Breast epithelium (tissue), 4 donors: ENCODE measurements at regions of chr16 and their contacts with region 1.

Region 1: DNA sequence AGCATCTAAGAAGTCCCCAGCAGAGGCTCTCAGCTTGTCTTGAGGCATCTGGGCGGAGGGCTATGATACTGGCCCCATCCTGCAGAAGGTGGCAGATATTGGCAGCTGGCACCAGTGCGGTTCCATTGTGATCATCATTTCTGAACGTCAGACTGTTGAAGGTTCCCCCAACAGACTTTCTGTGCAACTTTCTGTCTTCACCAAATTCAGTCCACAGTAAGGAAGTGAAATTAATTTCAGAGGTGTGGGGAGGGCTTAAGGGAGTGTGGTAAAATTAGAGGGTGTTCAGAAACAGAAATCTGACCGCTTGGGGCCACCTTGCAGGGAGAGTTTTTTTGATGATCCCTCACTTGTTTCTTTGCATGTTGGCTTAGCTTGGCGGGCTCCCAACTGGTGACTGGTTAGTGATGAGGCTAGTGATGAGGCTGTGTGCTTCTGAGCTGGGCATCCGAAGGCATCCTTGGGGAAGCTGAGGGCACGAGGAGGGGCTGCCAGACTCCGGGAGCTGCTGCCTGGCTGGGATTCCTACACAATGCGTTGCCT is at the start of gene CIITA:
- DNase-seq: peak; percentile 58 to 59
- H3K4me3 ChIP-seq: peak within 1 kb of the TSS in 2 of 3 donors; percentile 61 to 68
- H3K27ac ChIP-seq: peak within 1 kb of the TSS in 1 of 2 donors; percentile 32
- H3K4me1 ChIP-seq: no peaks in the 10 kb centered on the region
- H3K27me3 ChIP-seq: no peaks in the 10 kb centered on the region
- CTCF ChIP-seq: no peak
- POLR2A ChIP-seq: no peak
- total RNA-seq, gene CIITA: 5.6 to 14.6 (median 11.1) TPM

Region 2: GRCh38 chr16:10683170-10683569 is 193.7 kb before region 1 on chr16:
- intact Hi-C with region 1: no loop called
- DNase-seq: no peak
- H3K4me3 ChIP-seq: no peak overlapping the region
- H3K27ac ChIP-seq: no peak overlapping the region
- H3K4me1 ChIP-seq: no peaks in the 10 kb centered on the region
- H3K27me3 ChIP-seq: no peaks in the 10 kb centered on the region
- CTCF ChIP-seq: no peak
- POLR2A ChIP-seq: no peak

Region 3: GRCh38 chr16:10787304-10787703 is 89.6 kb before region 1 on chr16:
- intact Hi-C with region 1: loop called (anchors 2 kb)
- DNase-seq: no peak
- H3K4me3 ChIP-seq: no peak overlapping the region
- H3K27ac ChIP-seq: no peak overlapping the region
- H3K4me1 ChIP-seq: no peaks in the 10 kb centered on the region
- H3K27me3 ChIP-seq: no peaks in the 10 kb centered on the region
- CTCF ChIP-seq: no peak
- POLR2A ChIP-seq: no peak